ENCODE measurements at regions of chr5 and their contacts with region 1.

Region 1: GRCh38 chr5:17228821-17229291 is 11.4 kb downstream of the BASP1 start:
- DNase-seq: peak in 1 of 3 donors; percentile 35
- H3K4me3 ChIP-seq: no peak overlapping the region
- H3K4me3 Mint-ChIP-seq: no peak overlapping the region
- H3K27ac ChIP-seq: peak overlapping the region in 1 of 2 donors; percentile 13
- H3K27ac Mint-ChIP-seq: peak overlapping the region in 6 of 7 donors; percentile 5 to 79 (median 52)
- H3K4me1 ChIP-seq: peaks cover 19 to 24% of the 10 kb centered on the region in 2 donors
- H3K4me1 Mint-ChIP-seq: peaks cover 54% of the 10 kb centered on the region
- H3K27me3 ChIP-seq: no peaks in the 10 kb centered on the region
- H3K27me3 Mint-ChIP-seq: no peaks in the 10 kb centered on the region
- CTCF ChIP-seq: no peak

Region 2: GRCh38 chr5:17343675-17344074 is 114.8 kb after region 1 on chr5:
- intact Hi-C with region 1: loop called in 1 of 2 experiments (anchors 10 kb)
- DNase-seq: peak in 2 of 3 donors; percentile 15 to 33
- H3K4me3 ChIP-seq: no peak overlapping the region
- H3K4me3 Mint-ChIP-seq: no peak overlapping the region
- H3K27ac ChIP-seq: no peak overlapping the region
- H3K27ac Mint-ChIP-seq: peak overlapping the region in 1 of 7 donors; percentile 16
- H3K4me1 ChIP-seq: no peaks in the 10 kb centered on the region
- H3K4me1 Mint-ChIP-seq: peaks cover 9% of the 10 kb centered on the region
- H3K27me3 ChIP-seq: no peaks in the 10 kb centered on the region
- H3K27me3 Mint-ChIP-seq: peaks cover 0 to 3% (median 0%) of the 10 kb centered on the region in 3 donors
- CTCF ChIP-seq: no peak

Region 3: DNA sequence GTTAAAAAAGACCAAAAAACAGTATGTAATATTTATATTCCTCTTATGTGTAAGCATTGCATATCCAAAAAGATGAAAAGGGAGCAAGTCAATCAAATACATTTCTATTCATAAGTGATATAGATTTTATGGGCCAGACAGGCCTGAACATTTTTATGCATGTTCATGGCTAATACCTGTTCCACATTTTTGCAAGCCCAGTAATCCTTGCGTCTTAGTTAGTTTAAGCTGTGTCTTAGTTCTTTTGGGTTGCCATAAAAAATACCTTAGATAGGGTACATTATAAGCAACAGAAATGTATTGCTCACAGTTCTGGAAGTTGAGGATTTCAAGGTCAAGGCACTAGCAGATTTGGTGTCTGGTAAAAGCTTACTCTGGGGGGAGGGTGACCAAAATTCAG is 747.5 kb after region 1 on chr5:
- intact Hi-C with region 1: loop called in 1 of 2 experiments (anchors 5 kb)
- DNase-seq: no peak
- H3K4me3 ChIP-seq: no peak overlapping the region
- H3K4me3 Mint-ChIP-seq: no peak overlapping the region
- H3K27ac ChIP-seq: no peak overlapping the region
- H3K27ac Mint-ChIP-seq: no peak overlapping the region
- H3K4me1 ChIP-seq: no peaks in the 10 kb centered on the region
- H3K4me1 Mint-ChIP-seq: no peaks in the 10 kb centered on the region
- H3K27me3 ChIP-seq: no peaks in the 10 kb centered on the region
- H3K27me3 Mint-ChIP-seq: no peaks in the 10 kb centered on the region
- CTCF ChIP-seq: no peak